Endothelial cell of umbilical vein (primary cell): ENCODE measurements at regions of chr9 and their contacts with region 1.

Region 1: DNA sequence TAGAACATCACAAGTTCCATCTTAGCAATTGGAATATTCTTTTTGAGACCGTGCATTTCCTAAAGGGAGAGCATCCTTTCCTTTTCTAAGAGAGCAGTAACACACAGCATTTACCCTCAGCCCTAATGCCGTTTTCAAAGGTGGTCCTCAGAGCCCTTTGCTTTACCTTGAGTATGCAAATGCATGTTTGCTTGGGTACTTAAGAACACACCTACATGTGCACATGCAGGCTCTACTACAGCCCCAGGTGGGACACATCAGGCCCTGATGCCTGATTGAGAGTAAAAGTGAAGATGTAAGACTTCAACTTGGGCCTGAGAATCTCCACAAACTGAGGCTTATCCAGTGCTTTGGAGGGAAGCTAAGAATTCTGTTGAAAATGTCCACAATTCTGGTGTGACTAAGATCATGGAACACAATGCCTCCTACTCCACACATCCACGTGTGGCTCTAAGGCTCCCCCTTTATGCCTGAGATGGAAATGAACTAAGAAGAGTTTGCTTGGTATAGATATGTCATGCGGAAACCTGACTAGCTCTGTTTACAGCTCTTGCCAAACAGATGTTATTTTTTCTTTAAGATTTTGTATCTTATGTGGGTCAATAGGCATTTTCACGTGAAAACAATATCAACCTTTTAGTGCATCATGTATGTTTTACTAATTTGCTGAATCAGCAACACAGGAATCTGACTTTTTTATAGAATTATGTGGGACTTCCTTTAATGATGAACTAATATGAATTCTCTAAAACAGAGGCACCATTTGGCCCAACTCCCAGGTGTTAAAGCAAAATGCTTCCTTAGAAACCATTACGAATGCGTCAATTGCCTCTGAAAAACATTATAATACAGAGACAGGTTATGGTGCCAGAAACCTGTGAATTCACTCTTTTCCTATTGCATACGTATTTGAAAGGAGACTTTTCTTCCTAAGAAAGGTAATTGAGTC is 48.9 kb upstream of the SLC2A8 start:
- DNase-seq: peak; percentile 75
- H3K4me3 ChIP-seq: no peak overlapping the region
- H3K27ac ChIP-seq: no peak overlapping the region
- H3K4me1 ChIP-seq: no peaks in the 10 kb centered on the region
- H3K27me3 ChIP-seq: no peaks in the 10 kb centered on the region
- CTCF ChIP-seq: peak; percentile 33 to 57
- POLR2A ChIP-seq: no peak

Region 2: GRCh38 chr9:127104465-127105311 is 243.4 kb before region 1 on chr9:
- CTCF ChIA-PET with region 1: no interaction called
- POLR2A ChIA-PET with region 1: no interaction called
- dilution Hi-C with region 1: no loop called
- intact Hi-C with region 1: no loop called
- DNase-seq: no peak
- H3K4me3 ChIP-seq: no peak overlapping the region
- H3K27ac ChIP-seq: no peak overlapping the region
- H3K4me1 ChIP-seq: no peaks in the 10 kb centered on the region
- H3K27me3 ChIP-seq: no peaks in the 10 kb centered on the region
- CTCF ChIP-seq: no peak
- POLR2A ChIP-seq: no peak

Region 3: GRCh38 chr9:127133739-127134167 is 214.4 kb before region 1 on chr9:
- CTCF ChIA-PET with region 1: no interaction called
- POLR2A ChIA-PET with region 1: no interaction called
- dilution Hi-C with region 1: no loop called
- intact Hi-C with region 1: no loop called
- DNase-seq: no peak
- H3K4me3 ChIP-seq: no peak overlapping the region
- H3K27ac ChIP-seq: no peak overlapping the region
- H3K4me1 ChIP-seq: no peaks in the 10 kb centered on the region
- H3K27me3 ChIP-seq: peaks cover 0 to 4% of the 10 kb centered on the region in 2 experiments
- CTCF ChIP-seq: no peak
- POLR2A ChIP-seq: no peak

Region 4: GRCh38 chr9:127214421-127215267 is 133.5 kb before region 1 on chr9:
- CTCF ChIA-PET with region 1: interaction called, 32 read pairs
- POLR2A ChIA-PET with region 1: no interaction called
- dilution Hi-C with region 1: no loop called
- intact Hi-C with region 1: loop called (anchors 1 kb)
- DNase-seq: peak; percentile 52
- H3K4me3 ChIP-seq: no peak overlapping the region
- H3K27ac ChIP-seq: no peak overlapping the region
- H3K4me1 ChIP-seq: no peaks in the 10 kb centered on the region
- H3K27me3 ChIP-seq: peaks cover 0 to 5% of the 10 kb centered on the region in 2 experiments
- CTCF ChIP-seq: peak; percentile 79 to 91
- POLR2A ChIP-seq: no peak

Region 5: GRCh38 chr9:127229691-127230423 is 118.2 kb before region 1 on chr9:
- CTCF ChIA-PET with region 1: interaction called, 29 read pairs
- POLR2A ChIA-PET with region 1: interaction called, 3 read pairs
- dilution Hi-C with region 1: no loop called
- intact Hi-C with region 1: no loop called
- DNase-seq: no peak
- H3K4me3 ChIP-seq: no peak overlapping the region
- H3K27ac ChIP-seq: no peak overlapping the region
- H3K4me1 ChIP-seq: peaks cover 6% of the 10 kb centered on the region
- H3K27me3 ChIP-seq: no peaks in the 10 kb centered on the region
- CTCF ChIP-seq: no peak
- POLR2A ChIP-seq: no peak

Region 6: GRCh38 chr9:127311239-127311741 is 36.8 kb before region 1 on chr9:
- CTCF ChIA-PET with region 1: interaction called, 42 read pairs
- POLR2A ChIA-PET with region 1: no interaction called
- dilution Hi-C with region 1: no loop called
- intact Hi-C with region 1: loop called (anchors 1 kb)
- DNase-seq: peak; percentile 74
- H3K4me3 ChIP-seq: no peak overlapping the region
- H3K27ac ChIP-seq: no peak overlapping the region
- H3K4me1 ChIP-seq: peaks cover 5% of the 10 kb centered on the region
- H3K27me3 ChIP-seq: no peaks in the 10 kb centered on the region
- CTCF ChIP-seq: peak; percentile 44 to 56
- POLR2A ChIP-seq: no peak

Region 7: DNA sequence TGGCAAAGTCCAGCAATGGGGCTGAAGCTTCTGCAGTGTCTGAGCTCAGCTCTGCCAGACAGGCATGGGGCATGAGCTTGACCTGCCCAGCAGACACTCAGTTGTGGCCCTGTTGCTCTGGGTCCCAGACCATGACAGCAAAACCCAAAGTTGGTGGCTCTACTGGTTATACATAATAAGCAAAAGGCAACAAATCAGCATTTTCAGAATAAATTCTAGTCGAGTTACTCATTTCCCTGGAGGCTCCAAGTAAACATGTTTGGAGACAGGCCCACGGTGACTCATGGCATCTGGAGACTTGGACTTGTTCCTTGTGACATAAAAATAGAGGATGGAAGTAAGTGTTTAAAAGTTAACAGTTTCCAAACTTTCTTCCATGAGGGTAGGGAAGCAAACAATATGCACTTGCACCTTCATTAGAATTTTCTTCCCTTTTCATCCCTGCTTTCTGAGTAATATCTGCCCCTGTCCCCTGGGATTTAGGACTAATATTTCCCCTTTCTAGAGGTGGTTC is 11.3 kb before region 1 on chr9:
- CTCF ChIA-PET with region 1: interaction called, 13 read pairs
- POLR2A ChIA-PET with region 1: no interaction called
- dilution Hi-C with region 1: no loop called
- intact Hi-C with region 1: no loop called
- DNase-seq: peak; percentile 98
- H3K4me3 ChIP-seq: peak overlapping the region in 1 of 3 experiments; percentile 16
- H3K27ac ChIP-seq: peak overlapping the region; percentile 99
- H3K4me1 ChIP-seq: peaks cover 40% of the 10 kb centered on the region
- H3K27me3 ChIP-seq: no peaks in the 10 kb centered on the region
- CTCF ChIP-seq: no peak
- POLR2A ChIP-seq: peak; percentile 56

Region 8: DNA sequence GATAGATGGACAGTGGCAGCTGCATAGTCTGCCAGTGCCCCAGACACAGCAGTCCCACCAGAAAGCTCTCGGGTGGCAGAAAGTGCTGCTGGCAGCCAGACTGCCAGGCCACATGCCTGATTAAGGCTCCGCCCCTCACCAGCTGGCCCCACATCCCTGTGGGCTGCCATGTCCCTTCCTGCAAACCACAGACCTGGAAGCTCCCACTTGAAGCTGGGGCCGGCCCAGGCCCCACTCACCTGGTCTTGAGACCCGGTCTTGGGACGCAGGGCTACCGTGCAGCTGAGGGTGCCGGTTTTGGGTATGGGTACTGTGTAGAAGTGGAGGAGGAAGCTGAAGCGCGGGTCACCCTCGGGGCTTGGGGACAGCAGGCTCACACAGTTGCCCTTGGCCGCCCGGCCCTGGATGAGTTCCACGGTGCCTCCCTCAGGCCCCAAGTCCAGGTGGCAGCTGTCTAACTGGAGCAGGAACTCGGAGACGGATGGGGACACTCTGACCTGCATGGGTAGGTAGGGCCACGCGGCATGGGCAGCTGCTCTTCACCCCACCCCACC is 469.9 kb after region 1 on chr9:
- CTCF ChIA-PET with region 1: no interaction called
- POLR2A ChIA-PET with region 1: no interaction called
- dilution Hi-C with region 1: no loop called
- intact Hi-C with region 1: no loop called
- DNase-seq: no peak
- H3K4me3 ChIP-seq: no peak overlapping the region
- H3K27ac ChIP-seq: no peak overlapping the region
- H3K4me1 ChIP-seq: peaks cover 10% of the 10 kb centered on the region
- H3K27me3 ChIP-seq: no peaks in the 10 kb centered on the region
- CTCF ChIP-seq: no peak
- POLR2A ChIP-seq: no peak